Activated naive CD8-positive, alpha-beta T cell treated with anti-CD3 and anti-CD28 coated beads, Interleukin-2, amount 10 ng/mL, durations not matched to agents 7 days and 5 days (primary cell): ENCODE measurements at regions of chr11 and their contacts with region 1.

Region 1: DNA sequence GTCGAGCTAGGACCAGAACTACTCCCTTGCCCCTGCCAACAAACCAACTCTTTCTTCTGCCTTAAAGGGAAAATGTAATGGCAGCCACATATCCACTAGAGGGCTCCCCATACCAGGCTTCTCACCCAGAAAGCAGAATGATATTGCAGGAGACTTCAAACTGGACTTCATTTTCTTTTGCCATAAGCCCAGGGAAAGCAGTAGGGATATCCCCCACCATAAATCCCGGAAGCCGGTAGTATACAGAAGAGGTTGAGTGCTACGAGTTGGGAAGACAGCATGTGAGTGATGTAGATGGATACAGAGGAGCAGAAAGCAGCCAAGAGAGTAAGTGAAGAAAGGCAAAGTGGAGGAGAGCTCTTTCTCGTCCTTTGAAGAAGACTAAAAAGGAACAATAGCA is 12.1 kb downstream of the PLAAT5 start:
- DNase-seq: no peak
- ATAC-seq: peak; percentile 52
- H3K4me3 Mint-ChIP-seq: no peak overlapping the region
- H3K27ac Mint-ChIP-seq: no peak overlapping the region
- H3K4me1 Mint-ChIP-seq: no peaks in the 10 kb centered on the region
- H3K27me3 Mint-ChIP-seq: peaks cover 17% of the 10 kb centered on the region

Region 2: DNA sequence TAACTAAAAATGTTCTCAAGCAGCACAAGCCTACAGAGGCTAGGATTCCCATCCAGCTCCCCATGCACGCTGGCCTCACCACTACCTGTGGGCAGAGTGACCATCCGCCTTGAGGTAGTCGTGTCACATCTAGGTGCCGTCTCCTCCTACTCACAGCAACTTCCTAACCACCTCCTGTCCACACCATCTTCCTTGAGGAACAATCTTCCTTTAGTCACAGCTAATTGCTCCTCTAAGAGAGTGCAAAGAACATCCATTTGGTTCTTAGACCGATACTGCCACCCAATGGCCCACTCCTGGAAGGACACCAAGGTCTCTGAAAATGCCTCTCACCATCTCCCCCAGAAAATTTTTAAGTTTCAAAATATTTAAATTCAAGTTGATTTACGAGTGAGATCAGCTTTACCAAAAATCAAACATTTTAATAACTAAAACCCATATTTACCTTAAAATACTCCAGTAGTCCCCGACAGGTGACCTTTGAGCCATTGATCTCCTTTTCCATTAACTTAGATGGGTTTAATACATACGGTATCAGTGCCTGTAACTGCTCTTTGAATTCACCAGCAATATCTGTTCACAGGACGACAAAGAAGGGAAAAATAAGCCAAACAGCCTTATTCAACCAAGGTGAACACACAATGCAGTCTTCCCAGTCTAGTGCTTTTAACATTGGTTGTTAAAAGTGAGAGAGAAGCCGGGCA is 157.0 kb after region 1 on chr11:
- POLR2A ChIA-PET with region 1: interaction called, 12 read pairs
- DNase-seq: peak; percentile 59
- ATAC-seq: peak; percentile 71
- H3K4me3 Mint-ChIP-seq: no peak overlapping the region
- H3K27ac Mint-ChIP-seq: peak overlapping the region; percentile 5
- H3K4me1 Mint-ChIP-seq: peaks cover 15% of the 10 kb centered on the region
- H3K27me3 Mint-ChIP-seq: no peaks in the 10 kb centered on the region

Region 3: DNA sequence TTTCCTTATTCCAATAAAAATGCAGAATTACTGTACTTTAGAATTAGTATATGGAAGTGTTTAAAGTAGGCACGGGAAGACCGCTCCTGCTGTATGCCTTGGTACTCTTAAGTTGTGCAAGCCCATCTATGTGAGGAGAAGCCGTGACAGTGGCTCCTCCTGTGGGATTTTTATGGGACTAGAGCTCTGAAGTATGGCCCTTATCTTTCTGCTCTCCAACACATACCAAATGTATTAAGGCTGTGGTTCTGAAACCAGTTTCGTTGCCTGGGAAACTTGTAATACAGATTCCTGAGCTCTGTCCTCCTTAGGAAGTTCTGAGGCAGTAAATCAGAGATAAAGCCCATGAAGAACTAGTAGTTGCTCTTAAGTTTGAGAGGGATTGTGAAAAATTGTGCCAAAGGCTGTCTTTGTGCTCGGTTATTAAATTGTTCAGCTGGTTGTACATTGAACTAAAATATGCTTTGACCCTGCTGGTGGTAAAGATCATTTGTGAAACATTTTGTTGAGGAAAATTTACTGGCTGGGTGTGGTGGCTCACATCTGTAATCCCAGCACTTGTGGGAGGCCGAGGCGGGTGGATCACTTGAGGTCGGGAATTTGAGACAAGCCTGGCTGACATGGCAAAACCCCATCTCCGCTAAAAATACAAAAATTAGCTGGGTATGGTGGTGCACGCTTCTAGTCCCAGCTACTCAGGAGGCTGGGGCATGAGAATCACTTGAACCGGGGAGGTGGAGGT is 231.8 kb after region 1 on chr11:
- POLR2A ChIA-PET with region 1: no interaction called
- DNase-seq: no peak
- ATAC-seq: no peak
- H3K4me3 Mint-ChIP-seq: no peak overlapping the region
- H3K27ac Mint-ChIP-seq: no peak overlapping the region
- H3K4me1 Mint-ChIP-seq: peaks cover 4% of the 10 kb centered on the region
- H3K27me3 Mint-ChIP-seq: no peaks in the 10 kb centered on the region